ENCODE measurements at regions of chr11 and their contacts with region 1.

Region 1: DNA sequence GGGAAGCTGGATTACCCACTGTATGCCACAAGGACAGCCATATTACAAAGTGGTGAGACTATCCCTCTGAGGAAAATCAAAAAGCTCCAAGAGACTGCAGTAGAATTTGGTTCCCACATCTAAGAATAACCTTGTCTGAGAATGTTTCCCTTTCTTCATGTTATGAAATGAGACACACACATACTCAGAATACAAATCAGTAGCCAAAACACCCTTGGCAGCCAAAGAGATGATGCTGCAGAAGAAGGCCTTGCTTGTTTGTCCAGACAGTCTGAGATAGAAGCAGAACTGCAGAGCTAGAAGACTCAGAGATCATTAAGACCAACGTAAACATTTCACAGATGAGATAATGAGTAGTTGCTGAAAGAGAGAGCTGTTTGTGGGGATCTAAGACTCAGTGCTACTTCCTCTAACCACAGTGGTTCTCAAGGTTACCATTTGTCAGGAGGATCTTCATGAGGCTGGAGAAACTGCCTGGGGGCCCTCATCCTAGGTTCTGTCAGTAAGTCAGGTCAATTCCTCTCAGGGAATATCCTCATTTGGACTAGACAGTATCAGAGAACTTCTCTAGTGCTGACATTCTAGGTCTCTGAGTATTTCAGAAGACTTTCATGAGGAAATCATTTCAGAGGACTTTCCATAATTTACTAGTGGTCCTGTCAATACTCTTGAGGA is 38.9 kb downstream of the RELT start:
- DNase-seq: peak in 2 of 3 donors; percentile 45 to 54
- H3K4me3 ChIP-seq: no peak overlapping the region
- H3K4me3 Mint-ChIP-seq: no peak overlapping the region
- H3K27ac ChIP-seq: peak overlapping the region in 1 of 2 donors; percentile 45
- H3K27ac Mint-ChIP-seq: peak overlapping the region; percentile 5 to 87 (median 74)
- H3K4me1 ChIP-seq: peaks cover 38 to 45% of the 10 kb centered on the region in 2 donors
- H3K4me1 Mint-ChIP-seq: peaks cover 66% of the 10 kb centered on the region
- H3K27me3 ChIP-seq: no peaks in the 10 kb centered on the region
- H3K27me3 Mint-ChIP-seq: no peaks in the 10 kb centered on the region
- CTCF ChIP-seq: no peak

Region 2: GRCh38 chr11:73376160-73376802 is 38.8 kb before region 1 on chr11 and contains the start of gene RELT:
- intact Hi-C with region 1: no loop called
- DNase-seq: peak; percentile 91 to 94 (median 92)
- H3K4me3 ChIP-seq: peak within 1 kb of the TSS; percentile 59 to 95 (median 86)
- H3K4me3 Mint-ChIP-seq: peak within 1 kb of the TSS; percentile 98
- H3K27ac ChIP-seq: peak within 1 kb of the TSS; percentile 78 to 98
- H3K27ac Mint-ChIP-seq: peak within 1 kb of the TSS; percentile 97 to 99 (median 98)
- H3K4me1 ChIP-seq: peaks cover 57 to 62% of the 10 kb centered on the region in 2 donors
- H3K4me1 Mint-ChIP-seq: peaks cover 63% of the 10 kb centered on the region
- H3K27me3 ChIP-seq: no peaks in the 10 kb centered on the region
- H3K27me3 Mint-ChIP-seq: peaks cover 0 to 6% (median 2%) of the 10 kb centered on the region in 3 donors
- CTCF ChIP-seq: peak; percentile 96
- polyA plus RNA-seq, gene RELT: 16.4 to 265 (median 27.3) TPM

Region 3: DNA sequence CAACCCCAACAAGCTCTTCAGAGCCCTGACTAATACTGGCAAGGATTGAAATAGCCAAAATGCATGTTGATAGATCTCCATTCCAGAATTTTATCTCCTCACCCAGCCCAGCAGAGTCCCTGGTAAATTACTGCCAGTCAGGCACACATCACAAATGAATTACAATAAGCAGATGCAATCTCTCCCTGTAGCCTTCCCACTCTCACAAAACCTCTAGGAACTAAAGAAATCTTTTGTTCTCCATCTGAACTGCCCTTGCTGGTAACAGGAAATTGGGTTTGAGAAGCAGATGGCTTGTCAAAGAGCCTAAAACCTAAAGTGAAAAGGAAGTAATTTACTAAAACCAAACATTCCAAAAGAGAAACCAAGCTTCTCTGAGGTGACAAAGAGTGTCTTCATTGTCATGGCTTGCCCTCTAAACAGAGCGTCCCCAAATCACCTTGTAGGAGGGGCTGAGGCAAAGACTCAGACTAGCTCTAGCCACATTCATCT is 123.3 kb after region 1 on chr11:
- intact Hi-C with region 1: loop called in 1 of 2 experiments (anchors 10 kb)
- DNase-seq: peak in 2 of 3 donors; percentile 15 to 21
- H3K4me3 ChIP-seq: peak overlapping the region in 2 of 3 experiments; percentile 25 to 62
- H3K4me3 Mint-ChIP-seq: peak overlapping the region; percentile 16 to 75
- H3K27ac ChIP-seq: peak overlapping the region; percentile 28 to 81
- H3K27ac Mint-ChIP-seq: peak overlapping the region; percentile 76 to 91 (median 87)
- H3K4me1 ChIP-seq: peaks cover 50 to 60% of the 10 kb centered on the region in 2 donors
- H3K4me1 Mint-ChIP-seq: peaks cover 68% of the 10 kb centered on the region
- H3K27me3 ChIP-seq: no peaks in the 10 kb centered on the region
- H3K27me3 Mint-ChIP-seq: peaks cover 0 to 1% (median 0%) of the 10 kb centered on the region in 3 donors
- CTCF ChIP-seq: no peak

Measured in CD14-positive monocyte (primary cell).